Calu3 (cell line): ENCODE measurements at regions of chr17 and their contacts with region 1.

Region 1: GRCh38 chr17:17890773-17891759 is 54.3 kb upstream of the SREBF1 start:
- DNase-seq: peak; percentile 65
- H3K4me3 Mint-ChIP-seq: no peak overlapping the region
- H3K27ac Mint-ChIP-seq: no peak overlapping the region
- H3K4me1 Mint-ChIP-seq: no peaks in the 10 kb centered on the region
- H3K27me3 Mint-ChIP-seq: no peaks in the 10 kb centered on the region
- CTCF ChIP-seq: peak; percentile 63

Region 2: GRCh38 chr17:17613708-17614114 is 277.4 kb before region 1 on chr17:
- CTCF ChIA-PET with region 1: no interaction called
- intact Hi-C with region 1: no loop called
- DNase-seq: peak; percentile 55
- H3K4me3 Mint-ChIP-seq: no peak overlapping the region
- H3K27ac Mint-ChIP-seq: no peak overlapping the region
- H3K4me1 Mint-ChIP-seq: no peaks in the 10 kb centered on the region
- H3K27me3 Mint-ChIP-seq: no peaks in the 10 kb centered on the region
- CTCF ChIP-seq: peak; percentile 30

Region 3: GRCh38 chr17:17919169-17920107 is 28.4 kb after region 1 on chr17:
- CTCF ChIA-PET with region 1: interaction called, 21 read pairs
- intact Hi-C with region 1: loop called (anchors 1 kb)
- DNase-seq: peak; percentile 73
- H3K4me3 Mint-ChIP-seq: no peak overlapping the region
- H3K27ac Mint-ChIP-seq: no peak overlapping the region
- H3K4me1 Mint-ChIP-seq: peaks cover 27% of the 10 kb centered on the region
- H3K27me3 Mint-ChIP-seq: no peaks in the 10 kb centered on the region
- CTCF ChIP-seq: peak; percentile 25

Region 4: GRCh38 chr17:17983376-17983775 is 92.3 kb after region 1 on chr17:
- CTCF ChIA-PET with region 1: no interaction called
- intact Hi-C with region 1: no loop called
- DNase-seq: no peak
- H3K4me3 Mint-ChIP-seq: no peak overlapping the region
- H3K27ac Mint-ChIP-seq: no peak overlapping the region
- H3K4me1 Mint-ChIP-seq: no peaks in the 10 kb centered on the region
- H3K27me3 Mint-ChIP-seq: no peaks in the 10 kb centered on the region
- CTCF ChIP-seq: no peak

Region 5: DNA sequence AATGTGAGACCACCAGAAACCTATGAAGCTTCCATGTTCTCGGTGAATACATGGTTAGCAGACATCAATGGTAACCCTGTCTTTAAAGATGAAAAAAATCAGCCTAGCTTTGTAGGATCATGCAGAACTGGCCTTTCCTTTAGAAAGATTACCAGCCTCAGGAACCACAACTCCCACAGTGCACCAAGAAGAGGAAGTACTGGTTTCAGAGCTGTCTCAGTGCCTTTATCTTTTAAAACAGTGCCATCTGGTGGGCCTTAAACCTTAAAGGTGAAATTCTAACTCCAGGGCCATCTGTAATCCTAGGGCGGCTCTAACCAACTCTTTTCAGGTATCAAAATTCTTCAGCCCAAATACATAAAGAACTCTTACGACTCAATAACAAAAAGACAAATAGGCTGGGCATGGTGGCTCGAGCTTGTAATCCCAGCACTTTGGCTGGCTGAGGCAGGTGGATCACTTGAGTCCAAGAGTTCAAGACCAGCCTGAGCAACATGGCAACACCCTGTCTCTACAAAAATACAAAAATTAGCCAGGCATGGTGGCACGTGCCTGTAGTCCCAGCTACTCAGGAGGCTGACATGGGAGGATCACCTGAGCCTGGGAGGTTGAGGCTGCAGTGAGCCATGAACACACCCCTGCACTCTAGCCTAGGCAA is 142.5 kb after region 1 on chr17:
- CTCF ChIA-PET with region 1: interaction called, 10 read pairs
- intact Hi-C with region 1: loop called (anchors 1 kb)
- DNase-seq: peak; percentile 47
- H3K4me3 Mint-ChIP-seq: no peak overlapping the region
- H3K27ac Mint-ChIP-seq: no peak overlapping the region
- H3K4me1 Mint-ChIP-seq: peaks cover 16% of the 10 kb centered on the region
- H3K27me3 Mint-ChIP-seq: no peaks in the 10 kb centered on the region
- CTCF ChIP-seq: peak; percentile 48